Sciatic nerve (tissue), 2 donors: ENCODE measurements at regions of chr1 and their contacts with region 1.

Region 1: DNA sequence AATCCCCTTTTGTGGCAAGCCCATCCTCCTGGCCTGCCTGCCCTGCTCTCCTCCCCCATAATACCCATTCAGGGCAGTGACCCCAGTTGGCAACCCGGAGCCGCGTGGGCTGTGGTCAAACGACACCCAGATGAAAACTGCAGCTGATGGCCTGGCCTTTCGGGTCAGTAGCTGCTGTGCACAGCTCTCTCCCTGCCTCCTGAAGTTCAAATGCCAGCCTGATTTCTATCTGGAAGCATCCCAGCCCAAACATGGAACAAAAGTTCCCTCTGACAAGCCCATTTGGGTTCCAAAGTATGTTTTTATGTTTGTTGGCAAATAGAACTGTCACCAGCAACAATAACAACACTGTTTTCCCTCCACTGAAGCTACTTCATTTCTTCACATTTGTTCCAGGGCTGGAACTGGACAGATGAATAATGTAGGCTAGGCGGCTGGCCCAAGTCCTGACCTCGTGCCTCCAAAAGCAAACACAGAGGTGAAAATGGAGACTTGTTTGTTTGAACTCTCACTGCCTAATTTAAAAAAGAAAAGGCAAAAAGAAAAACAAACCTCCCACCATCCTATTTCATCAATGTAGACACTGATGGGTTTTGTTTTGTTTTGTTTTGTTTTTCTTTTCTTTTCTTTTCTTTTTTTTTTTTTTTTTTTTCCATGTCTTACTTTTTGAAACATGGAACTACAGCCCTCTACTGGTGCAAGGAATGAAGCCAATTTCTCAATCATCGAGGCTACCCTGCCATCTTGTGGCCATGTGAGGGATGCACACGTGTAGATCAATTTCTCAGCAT is 179.0 kb downstream of the ADSS2 start:
- DNase-seq: peak; percentile 77
- ATAC-seq: peak; percentile 89

Region 2: GRCh38 chr1:243343970-243344937 is 928.4 kb before region 1 on chr1:
- intact Hi-C with region 1: loop called (anchors 10 kb)
- DNase-seq: no peak
- ATAC-seq: peak; percentile 62

Region 3: DNA sequence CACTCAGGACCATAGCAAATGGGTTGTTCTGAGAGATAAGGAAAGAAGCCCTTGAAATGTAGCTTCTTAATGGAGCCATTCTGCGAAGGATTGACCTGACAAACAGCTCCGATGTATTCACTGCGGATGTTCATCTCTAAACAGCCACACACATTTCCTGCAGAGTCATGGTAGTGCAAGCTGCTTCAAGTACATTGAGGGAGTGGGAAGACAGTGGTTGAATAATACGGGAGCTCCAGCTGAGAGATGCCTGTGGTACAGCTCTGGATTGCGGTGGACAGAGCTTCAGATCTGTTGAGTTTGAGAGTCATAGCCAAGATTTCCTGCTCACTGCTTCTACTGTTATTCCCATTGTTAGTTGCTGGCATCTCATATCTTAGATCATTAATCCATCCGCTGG is 134.9 kb before region 1 on chr1:
- intact Hi-C with region 1: no loop called
- DNase-seq: no peak
- ATAC-seq: no peak